Motor neuron (in vitro differentiated cells): ENCODE measurements at regions of chr3 and their contacts with region 1.

Region 1: GRCh38 chr3:14124615-14125190 is at the starts of genes CHCHD4 and TMEM43:
- ATAC-seq: peak; percentile 65 to 91 (median 88)
- H3K4me3 ChIP-seq: peak within 1 kb of the TSS; percentile 53 to 89 (median 65)
- H3K27ac ChIP-seq: peak within 1 kb of the TSS; percentile 69 to 82
- H3K4me1 ChIP-seq: peaks cover 12 to 16% of the 10 kb centered on the region in 2 donors
- total RNA-seq, gene CHCHD4: 9.4 to 28.1 (median 13.9) TPM
- total RNA-seq, gene TMEM43: 27.7 to 81.8 (median 48.6) TPM

Region 2: DNA sequence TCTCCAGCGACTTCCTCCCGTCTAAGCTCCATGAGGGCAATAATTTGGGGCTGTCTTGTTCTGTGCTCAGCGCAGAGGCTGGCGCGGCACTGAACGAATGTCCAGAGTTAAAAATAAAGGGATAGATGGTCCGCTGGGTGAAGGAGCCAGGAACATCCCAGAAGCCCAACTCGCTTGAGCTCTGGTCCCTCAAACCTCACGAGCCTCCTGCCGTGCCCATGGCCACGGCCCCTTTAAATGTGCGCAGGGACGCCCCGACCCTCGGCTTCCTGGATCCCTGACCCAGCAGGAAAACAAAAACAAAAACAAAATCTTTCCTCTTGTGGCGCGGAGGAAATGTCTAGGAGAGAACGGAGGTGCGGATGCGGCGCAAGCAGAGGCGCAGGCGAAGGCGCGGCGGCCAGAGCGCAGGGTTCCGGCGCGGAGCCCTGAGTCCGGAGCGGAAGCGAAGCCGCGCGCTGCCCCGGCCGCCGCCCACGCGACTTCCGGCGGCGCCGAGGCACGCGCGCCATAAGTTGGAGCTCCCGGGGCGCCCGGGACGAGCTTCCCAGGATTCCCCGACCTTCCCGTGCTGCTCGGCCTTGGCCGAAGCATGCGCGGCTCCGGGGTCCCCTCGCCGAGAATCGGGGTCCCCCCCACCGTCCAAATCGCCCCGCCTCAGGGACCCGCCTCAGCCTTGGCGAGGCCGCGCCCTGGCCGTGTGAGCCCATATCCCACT is 192.0 kb before region 1 on chr3:
- in situ Hi-C with region 1: loop called in 1 of 9 experiments (anchors 25 kb)
- ATAC-seq: peak in 3 of 8 experiments; percentile 40 to 88 (median 42)
- H3K4me3 ChIP-seq: no peak overlapping the region
- H3K27ac ChIP-seq: no peak overlapping the region
- H3K4me1 ChIP-seq: no peaks in the 10 kb centered on the region